Ovary (tissue), 10 donors: ENCODE measurements at regions of chr12 and their contacts with region 1.

Region 1: DNA sequence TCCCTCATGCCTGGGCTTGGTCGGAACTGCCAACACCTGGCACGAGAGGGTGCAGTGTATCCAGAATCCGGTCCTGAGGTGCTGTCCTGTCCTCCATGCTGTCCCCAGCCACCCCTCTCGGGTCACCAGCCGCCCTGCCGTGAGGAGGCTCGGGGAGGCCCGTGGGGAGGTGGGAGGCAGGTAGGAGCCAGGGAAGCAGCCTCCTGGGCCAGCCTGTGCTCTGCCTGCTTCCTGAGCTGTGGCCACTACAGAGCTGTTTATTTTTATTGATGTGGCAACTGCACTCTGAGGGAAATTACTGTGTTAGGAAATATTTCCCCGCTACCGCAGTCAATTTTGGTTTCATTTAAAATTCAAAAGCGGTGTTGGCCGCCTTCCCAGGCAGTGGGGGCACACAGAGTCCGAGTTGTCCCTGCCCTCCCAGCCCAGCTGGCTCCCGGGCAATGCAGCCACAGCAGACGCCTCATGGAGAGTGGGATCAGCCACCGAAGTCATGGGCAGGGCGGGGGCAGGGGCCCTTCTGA is 18.3 kb downstream of the NOC4L start:
- DNase-seq: peak in 2 of 5 donors; percentile 49 to 73
- H3K4me3 ChIP-seq: no peak overlapping the region
- H3K27ac ChIP-seq: no peak overlapping the region
- H3K4me1 ChIP-seq: peaks cover 3% of the 10 kb centered on the region
- H3K27me3 ChIP-seq: no peaks in the 10 kb centered on the region
- CTCF ChIP-seq: no peak
- EP300 ChIP-seq: no peak
- POLR2A ChIP-seq: no peak

Region 2: DNA sequence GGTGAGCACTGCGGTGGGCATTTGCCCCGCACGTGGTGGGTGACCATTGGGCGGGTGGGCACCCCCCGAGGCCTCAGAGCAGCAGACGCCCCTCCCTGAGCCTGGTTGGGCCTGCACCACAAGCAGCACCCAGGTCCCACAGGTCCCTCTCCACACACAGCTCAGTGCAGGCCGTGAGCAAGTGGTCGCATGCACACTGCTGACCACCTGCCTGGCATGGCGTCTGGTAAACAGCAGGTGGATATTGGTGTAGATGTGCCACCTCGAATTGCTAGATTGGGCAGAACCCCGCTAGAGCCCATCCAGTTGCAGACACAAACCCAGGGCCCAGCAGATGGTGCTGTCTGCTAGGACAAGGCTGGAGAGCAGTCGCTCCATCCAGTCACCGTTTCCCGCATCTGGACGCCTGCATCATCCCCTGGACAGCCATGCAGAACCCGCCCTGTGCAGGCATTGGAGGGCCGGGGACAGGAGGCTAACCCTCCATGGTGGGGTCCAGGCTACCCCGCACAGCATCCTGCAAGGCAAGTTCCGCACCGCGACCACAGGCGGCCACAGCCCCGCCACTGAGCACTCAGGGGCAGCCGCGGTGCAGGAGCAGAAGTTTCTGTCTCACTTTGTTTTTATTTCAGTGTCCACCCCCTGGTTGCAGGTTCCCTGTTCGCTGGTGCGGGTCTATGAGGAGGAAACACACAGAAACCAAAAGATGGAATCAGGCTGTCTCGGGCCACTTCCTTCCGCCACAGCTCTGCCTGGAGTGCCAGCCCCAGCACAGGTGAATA is 1400.8 kb before region 1 on chr12:
- intact Hi-C with region 1: loop called in 1 of 4 experiments (anchors 5 kb)
- DNase-seq: peak; percentile 24 to 72 (median 41)
- H3K4me3 ChIP-seq: no peak overlapping the region
- H3K27ac ChIP-seq: no peak overlapping the region
- H3K4me1 ChIP-seq: no peaks in the 10 kb centered on the region
- H3K27me3 ChIP-seq: no peaks in the 10 kb centered on the region
- CTCF ChIP-seq: no peak
- EP300 ChIP-seq: no peak
- POLR2A ChIP-seq: no peak

Region 3: GRCh38 chr12:132030367-132031038 is 132.1 kb before region 1 on chr12:
- intact Hi-C with region 1: no loop called
- DNase-seq: peak in 1 of 5 donors; percentile 49
- H3K4me3 ChIP-seq: no peak overlapping the region
- H3K27ac ChIP-seq: peak overlapping the region in 1 of 2 donors; percentile 42
- H3K4me1 ChIP-seq: peaks cover 5% of the 10 kb centered on the region
- H3K27me3 ChIP-seq: no peaks in the 10 kb centered on the region
- CTCF ChIP-seq: no peak
- EP300 ChIP-seq: no peak
- POLR2A ChIP-seq: no peak

Region 4: DNA sequence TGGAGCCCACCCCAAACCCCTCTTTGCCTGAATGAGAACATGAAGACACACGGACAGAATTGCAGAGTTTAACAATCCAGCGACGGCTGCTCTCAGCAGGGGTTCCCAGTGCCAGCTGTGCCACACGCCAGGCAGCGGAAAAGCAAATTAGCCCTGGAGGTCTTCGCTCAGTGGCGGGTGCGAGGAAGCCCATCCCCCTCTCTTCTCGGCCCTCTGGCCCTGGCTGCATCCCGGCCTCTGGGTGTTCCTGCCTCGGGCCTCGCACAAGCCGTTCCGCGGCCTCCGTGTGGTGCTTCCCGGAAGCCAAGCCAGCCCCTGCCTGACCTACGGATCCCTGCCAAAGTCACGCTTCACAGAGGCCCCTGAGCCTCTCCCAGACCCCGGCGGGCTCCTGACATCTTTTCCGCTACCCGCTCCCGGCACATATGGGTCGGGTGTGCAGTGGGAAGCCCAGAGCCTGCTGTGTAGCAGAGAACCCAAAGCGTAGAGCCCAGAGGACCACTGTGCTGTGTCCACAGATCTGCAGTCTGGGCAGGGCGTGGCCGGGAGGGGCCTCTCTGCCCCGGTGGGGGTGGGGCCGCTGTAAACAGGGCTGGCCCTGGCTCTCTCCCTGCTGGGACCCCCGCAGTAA is 237.6 kb after region 1 on chr12:
- intact Hi-C with region 1: loop called in 1 of 4 experiments (anchors 10 kb)
- DNase-seq: peak in 1 of 5 donors; percentile 7
- H3K4me3 ChIP-seq: no peak overlapping the region
- H3K27ac ChIP-seq: no peak overlapping the region
- H3K4me1 ChIP-seq: no peaks in the 10 kb centered on the region
- H3K27me3 ChIP-seq: no peaks in the 10 kb centered on the region
- CTCF ChIP-seq: no peak
- EP300 ChIP-seq: no peak
- POLR2A ChIP-seq: no peak